ENCODE measurements at regions of chr6 and their contacts with region 1.

Region 1: DNA sequence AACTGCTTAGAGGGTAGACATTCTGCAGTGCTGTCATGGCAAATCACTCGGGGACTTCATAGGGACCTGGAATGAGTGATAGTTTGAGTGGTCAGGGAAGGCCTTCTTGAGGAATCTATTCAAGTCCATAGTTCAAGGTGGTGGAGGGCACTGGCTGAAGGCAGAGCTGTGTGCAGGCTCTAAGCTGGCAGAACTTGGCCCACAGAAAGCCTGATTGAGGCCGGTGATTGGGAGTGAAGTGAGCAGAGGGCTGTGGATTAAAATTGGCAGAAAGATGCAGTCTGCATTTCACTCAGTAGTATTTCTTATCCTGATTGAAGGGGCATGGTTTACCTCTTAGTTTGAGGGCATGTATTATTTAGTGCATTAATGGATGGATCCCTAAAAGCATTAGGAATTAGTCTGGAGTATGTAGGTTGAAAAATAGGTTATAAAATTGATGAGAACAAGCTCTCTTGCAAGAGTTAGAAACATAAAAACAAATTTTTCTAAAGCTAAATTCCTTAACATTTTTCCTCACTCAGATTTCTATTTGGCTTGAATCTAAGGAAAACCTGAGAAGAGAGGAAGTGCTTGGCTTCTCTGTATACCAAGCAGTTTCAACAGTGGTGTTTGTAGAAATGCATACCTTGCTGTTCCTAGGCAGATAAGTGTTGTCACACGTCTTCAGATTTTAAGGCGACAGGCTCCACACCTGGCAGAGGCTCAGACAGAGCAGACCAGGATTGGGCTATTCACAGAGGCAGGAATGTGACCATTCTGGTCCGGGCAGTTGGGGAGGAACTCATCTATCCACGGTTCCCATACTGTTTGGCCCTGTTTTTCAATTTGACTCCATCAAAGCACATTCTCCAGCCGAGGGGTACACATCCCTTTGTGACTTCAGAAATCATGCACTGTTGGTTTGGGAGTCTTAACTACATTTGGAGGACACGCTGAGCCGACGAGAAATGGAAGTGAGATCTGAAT is 45.2 kb downstream of the UTRN start:
- DNase-seq: no peak
- ATAC-seq: no peak

Region 2: GRCh38 chr6:144305567-144305966 is 24.7 kb before region 1 on chr6:
- intact Hi-C with region 1: loop called (anchors 1 kb)
- DNase-seq: no peak
- ATAC-seq: no peak

Measured in sciatic nerve (tissue), 2 donors.